ENCODE measurements at regions of chr10 and their contacts with region 1.

Region 1: DNA sequence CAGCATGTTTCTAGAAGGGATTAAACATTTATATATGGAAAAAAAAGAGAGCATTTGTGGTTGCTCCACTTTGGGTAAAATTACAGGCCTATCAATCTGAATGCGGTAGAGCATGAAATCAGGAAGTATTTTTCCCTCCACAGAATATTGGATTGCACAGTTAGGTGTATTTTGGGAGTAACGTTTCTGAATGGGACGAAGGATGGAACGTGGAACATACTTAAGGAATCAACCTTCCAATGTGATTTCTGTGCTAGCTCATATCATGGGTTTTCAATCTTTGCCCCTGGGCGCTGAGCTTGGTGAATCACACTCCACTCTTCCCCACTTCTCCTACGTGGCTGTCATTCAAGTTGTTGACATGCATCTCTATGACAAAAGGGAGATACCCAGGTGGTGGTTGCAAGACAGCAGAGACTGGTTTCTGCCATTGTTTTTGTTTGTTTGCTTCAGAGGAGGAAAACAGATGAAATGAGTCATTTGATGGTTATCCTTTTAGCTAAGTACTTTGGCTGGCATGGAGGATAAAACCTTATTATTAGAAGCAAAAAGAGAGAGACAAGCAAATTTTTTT is 573.8 kb downstream of the GATA3 start:
- DNase-seq: no peak
- ATAC-seq: no peak
- H3K4me3 ChIP-seq: no peak overlapping the region
- H3K27ac ChIP-seq: no peak overlapping the region
- H3K4me1 ChIP-seq: no peaks in the 10 kb centered on the region
- H3K27me3 ChIP-seq: no peaks in the 10 kb centered on the region
- CTCF ChIP-seq: no peak
- EP300 ChIP-seq: no peak
- POLR2A ChIP-seq: no peak
- RAD21 ChIP-seq: no peak

Region 2: GRCh38 chr10:8616166-8616565 is 12.1 kb before region 1 on chr10:
- CTCF ChIA-PET with region 1: no interaction called
- POLR2A ChIA-PET with region 1: no interaction called
- RAD21 ChIA-PET with region 1: no interaction called
- SMC1A ChIA-PET with region 1: interaction called, 15 read pairs
- in situ Hi-C with region 1: no loop called
- intact Hi-C with region 1: no loop called
- DNase-seq: peak; percentile 19
- ATAC-seq: peak; percentile 89
- H3K4me3 ChIP-seq: no peak overlapping the region
- H3K27ac ChIP-seq: no peak overlapping the region
- H3K4me1 ChIP-seq: no peaks in the 10 kb centered on the region
- H3K27me3 ChIP-seq: no peaks in the 10 kb centered on the region
- CTCF ChIP-seq: no peak
- EP300 ChIP-seq: no peak; a peak in 1 of 4 replicates
- POLR2A ChIP-seq: no peak
- RAD21 ChIP-seq: no peak

Region 3: GRCh38 chr10:8640878-8641277 is 12.6 kb after region 1 on chr10:
- CTCF ChIA-PET with region 1: no interaction called
- POLR2A ChIA-PET with region 1: no interaction called
- RAD21 ChIA-PET with region 1: no interaction called
- SMC1A ChIA-PET with region 1: no interaction called
- in situ Hi-C with region 1: no loop called
- intact Hi-C with region 1: no loop called
- DNase-seq: no peak
- ATAC-seq: no peak
- H3K4me3 ChIP-seq: no peak overlapping the region
- H3K27ac ChIP-seq: no peak overlapping the region
- H3K4me1 ChIP-seq: no peaks in the 10 kb centered on the region
- H3K27me3 ChIP-seq: no peaks in the 10 kb centered on the region
- CTCF ChIP-seq: no peak
- EP300 ChIP-seq: no peak
- POLR2A ChIP-seq: no peak
- RAD21 ChIP-seq: no peak

Region 4: DNA sequence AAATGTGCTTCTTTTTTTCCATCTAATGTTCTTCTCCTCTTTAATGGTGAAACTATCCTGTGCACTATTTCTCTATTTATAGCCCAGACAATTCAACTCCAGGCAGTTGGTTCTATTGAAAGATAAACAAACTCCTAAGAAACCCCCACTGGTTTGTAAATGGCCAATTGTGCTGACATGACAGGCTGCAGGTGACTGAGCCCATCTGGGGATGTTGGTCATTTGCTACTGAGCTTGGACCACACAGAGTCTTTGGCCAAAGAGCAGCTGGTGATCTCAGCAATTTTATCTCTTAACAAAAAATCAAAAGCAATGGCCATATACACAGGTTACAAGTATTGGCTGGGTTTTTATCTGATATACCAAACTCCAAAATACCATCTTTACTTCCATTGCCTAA is 1757.6 kb after region 1 on chr10:
- CTCF ChIA-PET with region 1: no interaction called
- POLR2A ChIA-PET with region 1: no interaction called
- RAD21 ChIA-PET with region 1: no interaction called
- SMC1A ChIA-PET with region 1: no interaction called
- in situ Hi-C with region 1: no loop called
- intact Hi-C with region 1: no loop called
- DNase-seq: no peak
- ATAC-seq: no peak
- H3K4me3 ChIP-seq: no peak overlapping the region
- H3K27ac ChIP-seq: no peak overlapping the region
- H3K4me1 ChIP-seq: no peaks in the 10 kb centered on the region
- H3K27me3 ChIP-seq: no peaks in the 10 kb centered on the region
- CTCF ChIP-seq: no peak
- EP300 ChIP-seq: no peak
- POLR2A ChIP-seq: no peak
- RAD21 ChIP-seq: no peak